Adrenal gland (tissue), 19 donors: ENCODE measurements at regions of chr3 and their contacts with region 1.

Region 1: GRCh38 chr3:8324740-8325139 is 176.9 kb upstream of the LMCD1 start:
- DNase-seq: peak in 6 of 7 donors; percentile 23 to 60 (median 47)
- H3K4me3 ChIP-seq: no peak overlapping the region
- H3K27ac ChIP-seq: no peak overlapping the region
- H3K4me1 ChIP-seq: peaks cover 0 to 6% of the 10 kb centered on the region in 2 donors
- H3K27me3 ChIP-seq: no peaks in the 10 kb centered on the region
- CTCF ChIP-seq: peak in 5 of 6 experiments; percentile 11 to 53 (median 41)
- POLR2A ChIP-seq: no peak

Region 2: DNA sequence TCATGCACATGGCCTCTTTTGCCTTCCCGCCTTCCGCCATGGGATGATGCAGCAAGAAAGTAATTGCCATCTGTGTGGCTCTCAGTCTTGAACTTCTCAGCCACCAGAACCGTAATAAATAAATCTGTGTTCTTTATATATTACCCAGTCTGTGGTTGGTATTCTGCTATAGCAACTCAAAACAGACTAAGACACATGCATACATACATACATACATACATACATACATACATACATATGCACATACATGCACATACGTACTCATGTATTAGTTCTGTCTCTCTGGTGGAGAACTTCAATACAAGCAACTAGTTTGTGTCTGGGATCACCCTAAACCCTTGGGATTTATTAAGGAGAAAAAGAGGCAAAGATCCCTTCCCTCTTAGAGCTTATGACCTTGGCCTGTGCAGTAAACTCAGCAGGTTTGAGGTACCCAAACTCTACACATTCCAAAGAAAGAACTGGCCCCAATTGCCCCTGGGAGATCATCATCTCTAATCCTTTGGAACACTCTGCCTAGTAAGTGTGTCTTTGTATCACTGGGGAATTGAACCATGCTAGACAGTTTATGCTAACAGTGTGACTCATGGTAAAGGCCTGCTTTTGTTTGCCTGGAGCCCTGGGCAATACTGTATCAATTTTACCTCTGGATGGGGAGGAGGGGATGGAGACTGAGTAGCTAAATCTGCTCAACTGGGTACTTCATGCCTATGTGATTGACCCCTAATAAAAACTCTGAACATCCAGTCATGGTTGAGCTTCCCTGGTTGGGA is 61.3 kb after region 1 on chr3:
- intact Hi-C with region 1: no loop called
- DNase-seq: no peak
- H3K4me3 ChIP-seq: no peak overlapping the region
- H3K27ac ChIP-seq: no peak overlapping the region
- H3K4me1 ChIP-seq: no peaks in the 10 kb centered on the region
- H3K27me3 ChIP-seq: no peaks in the 10 kb centered on the region
- CTCF ChIP-seq: no peak
- POLR2A ChIP-seq: no peak

Region 3: DNA sequence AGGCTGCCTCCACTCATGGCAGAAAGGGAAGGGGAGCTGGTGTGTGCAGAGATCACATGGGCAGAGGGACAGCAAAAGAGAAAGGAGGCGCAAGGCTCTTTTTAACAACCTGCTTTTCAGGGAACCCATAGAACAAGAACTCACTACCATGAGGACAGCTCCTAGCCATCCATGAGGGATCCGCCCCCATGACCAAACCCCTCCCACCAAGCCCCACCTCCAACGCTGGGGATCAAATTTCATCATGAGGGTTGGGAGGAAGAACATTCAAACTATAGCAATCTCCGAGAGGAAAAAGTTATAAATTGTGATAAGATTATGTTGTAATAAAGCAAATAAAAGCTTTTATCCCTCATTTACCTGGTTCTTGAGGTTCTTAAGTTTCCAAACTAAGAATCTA is 92.2 kb after region 1 on chr3:
- intact Hi-C with region 1: loop called in 1 of 2 experiments (anchors 10 kb)
- DNase-seq: peak in 6 of 7 donors; percentile 34 to 58 (median 48)
- H3K4me3 ChIP-seq: peak overlapping the region in 1 of 4 donors; percentile 37
- H3K27ac ChIP-seq: no peak overlapping the region
- H3K4me1 ChIP-seq: peaks cover 0 to 5% of the 10 kb centered on the region in 2 donors
- H3K27me3 ChIP-seq: no peaks in the 10 kb centered on the region
- CTCF ChIP-seq: no peak
- POLR2A ChIP-seq: no peak